ENCODE measurements at regions of chr17 and their contacts with region 1.

Region 1: GRCh38 chr17:77734341-77735080 is 224.0 kb upstream of the TNRC6C start:
- DNase-seq: peak; percentile 95 to 96
- ATAC-seq: peak; percentile 84
- H3K4me3 ChIP-seq: no peak overlapping the region
- H3K27ac ChIP-seq: peak overlapping the region in 1 of 2 donors; percentile 83
- H3K4me1 ChIP-seq: no peaks in the 10 kb centered on the region
- H3K27me3 ChIP-seq: no peaks in the 10 kb centered on the region

Region 2: GRCh38 chr17:77489911-77490255 is 244.6 kb before region 1 on chr17:
- intact Hi-C with region 1: no loop called
- DNase-seq: peak; percentile 91 to 95
- ATAC-seq: peak; percentile 90
- H3K4me3 ChIP-seq: no peak overlapping the region
- H3K27ac ChIP-seq: no peak overlapping the region
- H3K4me1 ChIP-seq: no peaks in the 10 kb centered on the region
- H3K27me3 ChIP-seq: no peaks in the 10 kb centered on the region

Region 3: DNA sequence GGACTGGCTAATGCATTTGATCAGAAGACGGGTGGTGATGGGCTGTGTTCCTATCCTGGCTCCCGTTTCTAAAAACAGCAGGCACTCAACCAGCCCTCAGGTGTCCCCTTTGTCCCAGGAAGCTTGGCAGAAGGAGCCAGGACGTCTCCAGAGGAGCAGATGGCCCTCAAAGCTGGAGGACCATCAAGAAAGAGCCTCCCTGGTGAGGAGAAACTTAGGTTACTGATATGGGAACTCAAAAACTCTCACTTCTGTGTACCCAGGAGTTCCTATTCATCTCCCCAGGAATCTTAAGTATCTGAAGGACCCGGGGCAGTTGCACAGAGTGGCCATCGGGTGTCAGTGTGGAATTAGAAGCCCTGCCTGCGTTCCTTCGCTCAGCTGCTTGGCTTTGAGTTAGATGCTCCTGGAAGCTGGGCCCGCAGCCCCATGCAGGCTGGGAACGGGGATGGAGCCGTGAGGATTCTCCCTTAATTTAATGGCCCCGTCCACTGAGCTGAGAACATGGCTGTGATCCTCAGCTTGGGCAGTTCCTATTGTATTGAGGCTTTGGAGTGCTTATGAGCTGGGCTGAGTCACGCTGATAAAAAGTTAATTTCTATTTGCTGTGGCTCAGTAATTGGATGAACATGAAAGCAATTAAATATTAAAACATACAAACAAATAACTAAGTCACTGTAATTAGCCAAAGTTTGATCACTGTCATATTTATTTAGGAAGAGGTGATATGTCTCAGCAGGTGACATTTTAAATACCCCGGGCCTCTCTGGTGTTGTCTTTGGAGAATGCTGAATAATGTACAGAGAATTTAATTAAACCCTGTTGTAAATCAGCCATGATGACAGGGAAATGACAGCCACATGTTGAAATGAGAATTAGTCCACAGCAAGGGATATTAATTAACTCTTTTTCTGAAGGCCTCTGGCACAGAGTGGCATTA is 191.7 kb before region 1 on chr17:
- intact Hi-C with region 1: loop called (anchors 2 to 10 kb)
- DNase-seq: peak; percentile 89
- ATAC-seq: peak; percentile 94
- H3K4me3 ChIP-seq: no peak overlapping the region
- H3K27ac ChIP-seq: no peak overlapping the region
- H3K4me1 ChIP-seq: no peaks in the 10 kb centered on the region
- H3K27me3 ChIP-seq: no peaks in the 10 kb centered on the region

Region 4: GRCh38 chr17:77690271-77691161 is 44.0 kb before region 1 on chr17:
- intact Hi-C with region 1: loop called in 1 of 2 experiments (anchors 5 kb)
- DNase-seq: peak in 1 of 2 donors; percentile 39
- ATAC-seq: no peak
- H3K4me3 ChIP-seq: peak overlapping the region in 1 of 2 donors; percentile 23
- H3K27ac ChIP-seq: no peak overlapping the region
- H3K4me1 ChIP-seq: no peaks in the 10 kb centered on the region
- H3K27me3 ChIP-seq: no peaks in the 10 kb centered on the region

Region 5: GRCh38 chr17:77778636-77779489 is 44.4 kb after region 1 on chr17:
- intact Hi-C with region 1: loop called in 1 of 2 experiments (anchors 5 kb)
- DNase-seq: peak; percentile 92
- ATAC-seq: peak; percentile 88
- H3K4me3 ChIP-seq: no peak overlapping the region
- H3K27ac ChIP-seq: peak overlapping the region; percentile 61 to 91
- H3K4me1 ChIP-seq: no peaks in the 10 kb centered on the region
- H3K27me3 ChIP-seq: no peaks in the 10 kb centered on the region